ENCODE measurements at regions of chr22 and their contacts with region 1.

Region 1: GRCh38 chr22:19730655-19731360 is 7.5 kb downstream of the GP1BB start:
- DNase-seq: peak; percentile 86
- ATAC-seq: peak; percentile 90
- H3K4me3 ChIP-seq: peak overlapping the region in 4 of 5 experiments; percentile 10 to 45 (median 34)
- H3K4me3 Mint-ChIP-seq: peak overlapping the region; percentile 84
- H3K27ac ChIP-seq: no peak overlapping the region
- H3K27ac Mint-ChIP-seq: no peak overlapping the region
- H3K4me1 ChIP-seq: peaks cover 6 to 9% of the 10 kb centered on the region in 2 donors
- H3K4me1 Mint-ChIP-seq: peaks cover 2% of the 10 kb centered on the region
- H3K27me3 ChIP-seq: peaks cover 0 to 9% (median 0%) of the 10 kb centered on the region in 4 experiments
- H3K27me3 Mint-ChIP-seq: peaks cover 3% of the 10 kb centered on the region
- CTCF ChIP-seq: peak; percentile 93

Region 2: GRCh38 chr22:19701420-19702145 is 29.2 kb before region 1 on chr22:
- CTCF ChIA-PET with region 1: interaction called, 10 read pairs
- POLR2A ChIA-PET with region 1: no interaction called
- intact Hi-C with region 1: no loop called
- DNase-seq: no peak
- ATAC-seq: no peak
- H3K4me3 ChIP-seq: no peak overlapping the region
- H3K4me3 Mint-ChIP-seq: no peak overlapping the region
- H3K27ac ChIP-seq: no peak overlapping the region
- H3K27ac Mint-ChIP-seq: no peak overlapping the region
- H3K4me1 ChIP-seq: no peaks in the 10 kb centered on the region
- H3K4me1 Mint-ChIP-seq: no peaks in the 10 kb centered on the region
- H3K27me3 ChIP-seq: no peaks in the 10 kb centered on the region
- H3K27me3 Mint-ChIP-seq: peaks cover 12% of the 10 kb centered on the region
- CTCF ChIP-seq: no peak

Region 3: GRCh38 chr22:19772422-19773324 is 41.9 kb after region 1 on chr22:
- CTCF ChIA-PET with region 1: interaction called, 18 read pairs
- POLR2A ChIA-PET with region 1: no interaction called
- intact Hi-C with region 1: no loop called
- DNase-seq: peak; percentile 75
- ATAC-seq: peak; percentile 83
- H3K4me3 ChIP-seq: peak overlapping the region in 2 of 5 experiments; percentile 12 to 24
- H3K4me3 Mint-ChIP-seq: peak overlapping the region; percentile 81
- H3K27ac ChIP-seq: no peak overlapping the region
- H3K27ac Mint-ChIP-seq: peak overlapping the region; percentile 37
- H3K4me1 ChIP-seq: peaks cover 35 to 41% of the 10 kb centered on the region in 2 donors
- H3K4me1 Mint-ChIP-seq: peaks cover 38% of the 10 kb centered on the region
- H3K27me3 ChIP-seq: peaks cover 0 to 90% (median 56%) of the 10 kb centered on the region in 4 experiments
- H3K27me3 Mint-ChIP-seq: peaks cover 72% of the 10 kb centered on the region
- CTCF ChIP-seq: no peak

Region 4: GRCh38 chr22:19909350-19910179 is 178.8 kb after region 1 on chr22:
- CTCF ChIA-PET with region 1: interaction called, 210 read pairs
- POLR2A ChIA-PET with region 1: interaction called, 4 read pairs
- intact Hi-C with region 1: no loop called
- DNase-seq: peak; percentile 83
- ATAC-seq: peak; percentile 88
- H3K4me3 ChIP-seq: no peak overlapping the region
- H3K4me3 Mint-ChIP-seq: no peak overlapping the region
- H3K27ac ChIP-seq: no peak overlapping the region
- H3K27ac Mint-ChIP-seq: no peak overlapping the region
- H3K4me1 ChIP-seq: no peaks in the 10 kb centered on the region
- H3K4me1 Mint-ChIP-seq: peaks cover 1% of the 10 kb centered on the region
- H3K27me3 ChIP-seq: no peaks in the 10 kb centered on the region
- H3K27me3 Mint-ChIP-seq: no peaks in the 10 kb centered on the region
- CTCF ChIP-seq: peak; percentile 75

Region 5: DNA sequence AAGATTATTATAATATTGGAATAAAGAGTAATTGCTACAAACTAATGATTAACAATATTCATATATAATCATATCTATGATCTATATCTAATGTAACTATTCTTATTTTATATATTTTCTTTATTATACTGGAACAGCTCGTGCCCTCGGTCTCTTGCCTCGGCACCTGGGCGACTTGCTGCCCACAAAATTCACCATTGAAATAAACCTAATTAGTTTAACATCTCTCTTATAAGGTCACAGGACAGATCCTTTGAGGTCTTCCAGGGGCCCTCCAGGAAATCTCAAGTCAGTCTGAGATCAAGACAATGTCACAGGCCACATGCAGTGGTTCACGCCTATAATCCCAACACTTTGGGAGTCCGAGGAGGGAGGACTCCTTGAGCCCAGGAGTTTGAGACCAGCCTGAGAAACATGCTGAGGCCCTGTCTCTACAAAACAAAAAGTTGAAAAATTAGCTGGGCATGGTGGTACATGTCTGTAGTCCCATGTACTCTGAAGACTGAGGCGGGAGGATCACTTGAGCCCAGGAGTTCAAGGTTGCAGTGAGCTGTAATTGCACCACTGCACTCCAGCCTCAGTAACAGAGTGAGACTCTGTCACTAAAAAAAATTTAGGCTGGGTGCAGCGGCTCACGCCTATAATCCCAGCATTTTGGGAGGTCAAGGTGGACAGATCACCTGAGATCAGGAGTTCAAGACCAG is 217.4 kb after region 1 on chr22:
- CTCF ChIA-PET with region 1: interaction called, 23 read pairs
- POLR2A ChIA-PET with region 1: no interaction called
- intact Hi-C with region 1: loop called (anchors 1 kb)
- DNase-seq: no peak
- ATAC-seq: no peak
- H3K4me3 ChIP-seq: no peak overlapping the region
- H3K4me3 Mint-ChIP-seq: no peak overlapping the region
- H3K27ac ChIP-seq: no peak overlapping the region
- H3K27ac Mint-ChIP-seq: no peak overlapping the region
- H3K4me1 ChIP-seq: peaks cover 10 to 16% of the 10 kb centered on the region in 2 donors
- H3K4me1 Mint-ChIP-seq: peaks cover 29% of the 10 kb centered on the region
- H3K27me3 ChIP-seq: no peaks in the 10 kb centered on the region
- H3K27me3 Mint-ChIP-seq: no peaks in the 10 kb centered on the region
- CTCF ChIP-seq: peak; percentile 61

Region 6: DNA sequence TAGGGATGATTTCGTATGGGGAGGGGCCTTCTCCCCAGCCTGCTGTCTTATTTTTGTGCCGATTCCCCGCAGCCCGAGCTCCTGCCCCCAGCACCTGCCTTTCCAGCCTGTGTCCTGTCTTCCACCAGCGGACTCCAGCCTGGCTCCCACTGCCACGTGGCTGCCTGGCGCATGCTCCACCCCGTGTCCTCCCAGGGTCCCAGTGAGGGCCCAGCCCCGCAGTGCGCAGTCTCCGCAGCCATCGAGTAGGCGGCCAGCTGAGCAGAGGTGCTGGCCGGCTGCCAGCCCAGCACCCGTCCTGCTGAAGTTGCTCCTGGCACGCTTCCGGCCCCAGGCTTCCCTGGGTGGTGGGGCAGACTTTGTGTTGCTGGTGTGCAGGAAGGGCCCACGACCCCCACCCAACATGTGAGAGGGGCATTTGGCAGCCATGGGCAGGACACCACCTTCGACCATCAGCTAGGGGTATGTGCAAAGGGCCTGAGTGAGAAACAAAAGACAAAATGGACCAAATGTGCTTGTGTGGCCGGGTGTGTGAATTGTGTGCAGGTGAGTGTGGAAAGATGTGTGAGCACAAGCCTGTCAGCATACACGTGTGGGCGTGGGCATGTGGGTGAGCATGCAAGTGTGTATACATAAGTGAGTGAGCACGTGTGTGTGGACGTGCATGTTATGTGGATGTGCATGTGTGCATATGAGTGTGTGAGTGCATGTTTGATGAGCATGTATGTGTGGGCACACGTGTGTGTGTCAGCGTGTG is 481.4 kb after region 1 on chr22:
- CTCF ChIA-PET with region 1: no interaction called
- POLR2A ChIA-PET with region 1: no interaction called
- intact Hi-C with region 1: no loop called
- DNase-seq: no peak
- ATAC-seq: no peak
- H3K4me3 ChIP-seq: no peak overlapping the region
- H3K4me3 Mint-ChIP-seq: no peak overlapping the region
- H3K27ac ChIP-seq: no peak overlapping the region
- H3K27ac Mint-ChIP-seq: no peak overlapping the region
- H3K4me1 ChIP-seq: peaks cover 5 to 15% of the 10 kb centered on the region in 2 donors
- H3K4me1 Mint-ChIP-seq: peaks cover 14% of the 10 kb centered on the region
- H3K27me3 ChIP-seq: peaks cover 0 to 8% (median 0%) of the 10 kb centered on the region in 4 experiments
- H3K27me3 Mint-ChIP-seq: peaks cover 6% of the 10 kb centered on the region
- CTCF ChIP-seq: no peak

Measured in B cell (primary cell).